GM12878 (cell line): ENCODE measurements at regions of chr20 and their contacts with region 1.

Region 1: DNA sequence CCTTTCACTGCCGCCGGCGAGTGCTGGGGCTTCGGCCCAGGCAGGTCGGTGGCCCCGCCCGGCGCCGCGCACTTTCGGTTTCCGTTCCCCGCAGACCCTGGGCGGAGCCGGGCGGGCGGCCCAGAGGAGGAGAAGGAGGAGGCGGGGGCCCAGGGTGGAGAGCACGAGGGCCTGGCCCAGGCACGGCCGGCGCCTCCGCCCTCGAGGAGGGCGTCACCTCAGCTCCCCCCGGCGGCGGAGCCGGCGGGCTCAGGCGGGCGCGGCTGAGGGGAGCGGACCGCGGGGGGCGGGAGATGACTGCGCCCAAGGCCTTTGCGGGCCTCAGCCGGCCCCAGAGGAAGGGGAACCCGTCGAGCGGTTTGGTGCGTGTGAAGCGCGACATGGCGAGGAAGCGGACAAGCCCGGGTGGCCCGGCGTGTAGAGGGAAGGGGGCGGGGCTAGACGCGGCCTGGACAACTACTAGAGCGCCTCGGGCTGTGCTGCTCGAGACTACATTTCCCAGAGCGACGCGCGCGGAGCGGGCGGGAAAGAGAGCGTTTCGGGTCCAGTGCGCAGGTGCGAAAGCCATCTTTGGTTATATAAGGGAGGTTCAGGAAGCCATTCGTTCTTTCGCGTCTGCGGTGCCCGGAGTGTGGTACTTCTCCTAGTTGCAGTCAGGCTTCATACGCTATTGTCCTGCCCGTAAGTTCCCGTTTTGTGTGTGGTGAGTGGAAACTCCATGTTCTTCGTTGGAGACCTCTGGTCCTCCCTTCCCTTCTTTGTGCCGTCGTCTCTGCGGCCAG is at the start of gene ZNFX1:
- DNase-seq: peak; percentile 95
- ATAC-seq: peak; percentile 85
- H3K4me3 ChIP-seq: peak within 1 kb of the TSS; percentile 95
- H3K27ac ChIP-seq: peak within 1 kb of the TSS; percentile 92
- H3K4me1 ChIP-seq: peaks cover 3% of the 10 kb centered on the region; the same call in 1 of the 2 replicates
- H3K27me3 ChIP-seq: no peaks in the 10 kb centered on the region
- CTCF ChIP-seq: peak in 2 of 3 experiments; percentile 3 to 24; a peak in 2 of 6 replicates
- EP300 ChIP-seq: 0 out of 4 replicates have a peak, but pooled peaks of 1 of the 2 experiments have one; percentile 9
- POLR2A ChIP-seq: peak; percentile 99
- RAD21 ChIP-seq: no peak
- polyA plus RNA-seq, gene ZNFX1: 7.4 to 14.6 TPM

Region 2: GRCh38 chr20:49207076-49207475 is 71.2 kb before region 1 on chr20:
- CTCF ChIA-PET with region 1: no interaction called
- POLR2A ChIA-PET with region 1: no interaction called
- RAD21 ChIA-PET with region 1: no interaction called
- SMC1A ChIA-PET with region 1: no interaction called
- in situ Hi-C with region 1: no loop called
- intact Hi-C with region 1: no loop called
- DNase-seq: no peak
- ATAC-seq: peak; percentile 83
- H3K4me3 ChIP-seq: no peak overlapping the region
- H3K27ac ChIP-seq: no peak overlapping the region
- H3K4me1 ChIP-seq: no peaks in the 10 kb centered on the region
- H3K27me3 ChIP-seq: no peaks in the 10 kb centered on the region
- CTCF ChIP-seq: peak; percentile 35 to 50 (median 40); a peak in 5 of 6 replicates
- EP300 ChIP-seq: no peak
- POLR2A ChIP-seq: no peak
- RAD21 ChIP-seq: peak; percentile 67

Region 3: GRCh38 chr20:49812463-49813304 is 534.5 kb after region 1 on chr20 and contains the start of gene SLC9A8:
- CTCF ChIA-PET with region 1: interaction called, 3 read pairs
- POLR2A ChIA-PET with region 1: interaction called, 3 read pairs
- RAD21 ChIA-PET with region 1: no interaction called
- SMC1A ChIA-PET with region 1: no interaction called
- in situ Hi-C with region 1: no loop called
- intact Hi-C with region 1: loop called (anchors 10 kb)
- DNase-seq: peak; percentile 78
- ATAC-seq: peak; percentile 93
- H3K4me3 ChIP-seq: peak within 1 kb of the TSS; percentile 76
- H3K27ac ChIP-seq: peak within 1 kb of the TSS; percentile 78
- H3K4me1 ChIP-seq: peaks cover 6% of the 10 kb centered on the region
- H3K27me3 ChIP-seq: no peaks in the 10 kb centered on the region
- CTCF ChIP-seq: peak; percentile 10 to 44 (median 36); a peak in 3 of 6 replicates
- EP300 ChIP-seq: peak in 1 of 2 experiments; percentile 7; a peak in 1 of 4 replicates
- POLR2A ChIP-seq: peak; percentile 85
- RAD21 ChIP-seq: no peak
- polyA plus RNA-seq, gene SLC9A8: 0.40 to 0.53 TPM